MCF 10A (cell line): ENCODE measurements at regions of chr12 and their contacts with region 1.

Region 1: GRCh38 chr12:104215638-104216297 is at the start of gene TXNRD1:
- DNase-seq: no peak
- H3K4me3 Mint-ChIP-seq: no peak within 1 kb of the TSS
- H3K27ac Mint-ChIP-seq: peak within 1 kb of the TSS; percentile 6
- H3K4me1 Mint-ChIP-seq: peaks cover 20% of the 10 kb centered on the region
- H3K27me3 Mint-ChIP-seq: no peaks in the 10 kb centered on the region
- CTCF ChIP-seq: no peak
- total RNA-seq, gene TXNRD1: 64.0 and 82.8 TPM in 2 replicates

Region 2: DNA sequence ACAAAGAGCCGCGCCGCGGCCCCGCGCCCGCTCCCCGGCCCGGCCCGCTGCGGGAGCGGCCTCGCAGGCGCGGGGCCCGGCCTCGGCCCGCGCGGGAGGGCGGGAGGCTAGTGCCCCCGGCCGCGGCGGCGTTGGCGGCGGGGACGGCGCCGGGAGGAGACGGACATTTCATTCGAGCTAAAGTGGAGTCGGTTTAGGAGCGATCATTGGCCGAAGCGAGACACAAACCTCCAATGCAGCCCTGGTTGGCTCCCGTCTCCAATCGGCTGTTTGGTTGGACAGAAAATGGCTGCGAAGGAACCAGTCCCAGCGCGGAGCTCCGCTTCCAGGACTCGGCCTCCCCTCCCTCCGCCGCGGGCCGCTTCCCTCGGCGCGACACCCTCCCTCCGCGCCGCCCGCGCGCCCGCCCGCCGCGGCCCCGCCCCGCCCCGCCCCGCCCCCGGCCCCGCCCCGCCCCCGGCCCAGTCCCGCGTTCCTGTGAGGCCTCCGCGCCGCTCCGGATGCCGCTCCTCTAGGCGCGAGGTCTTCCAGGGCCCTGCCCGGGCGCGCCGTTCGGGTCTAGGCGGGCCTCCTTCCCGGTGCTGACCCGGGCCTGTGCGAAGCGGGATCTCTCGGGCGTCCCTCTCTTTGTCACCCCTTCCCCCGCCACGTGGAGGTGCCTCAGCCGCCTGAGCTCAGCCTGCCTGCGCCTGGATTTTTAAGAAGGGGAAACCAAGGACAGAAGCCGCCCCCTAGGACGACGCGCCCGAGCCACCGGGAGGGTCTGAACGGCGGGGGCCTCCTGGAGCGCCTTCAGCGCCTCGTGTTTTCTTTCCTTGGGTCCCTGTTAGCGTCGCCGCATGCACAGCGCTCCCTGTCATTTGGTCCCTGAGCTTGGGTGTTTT is 77.6 kb before region 1 on chr12 and contains the start of gene NFYB:
- CTCF ChIA-PET with region 1: no interaction called
- POLR2A ChIA-PET with region 1: interaction called, 14 read pairs
- intact Hi-C with region 1: no loop called
- DNase-seq: peak; percentile 99
- H3K4me3 Mint-ChIP-seq: peak within 1 kb of the TSS; percentile 78
- H3K27ac Mint-ChIP-seq: peak within 1 kb of the TSS; percentile 46
- H3K4me1 Mint-ChIP-seq: peaks cover 8% of the 10 kb centered on the region
- H3K27me3 Mint-ChIP-seq: no peaks in the 10 kb centered on the region
- CTCF ChIP-seq: no peak
- total RNA-seq, gene NFYB: 24.8 and 27.0 TPM in 2 replicates

Region 3: GRCh38 chr12:104171785-104172442 is 43.9 kb before region 1 on chr12:
- CTCF ChIA-PET with region 1: no interaction called
- POLR2A ChIA-PET with region 1: no interaction called
- intact Hi-C with region 1: no loop called
- DNase-seq: no peak
- H3K4me3 Mint-ChIP-seq: no peak overlapping the region
- H3K27ac Mint-ChIP-seq: no peak overlapping the region
- H3K4me1 Mint-ChIP-seq: peaks cover 9% of the 10 kb centered on the region
- H3K27me3 Mint-ChIP-seq: no peaks in the 10 kb centered on the region
- CTCF ChIP-seq: no peak

Region 4: GRCh38 chr12:104230304-104231095 is 14.7 kb after region 1 on chr12:
- CTCF ChIA-PET with region 1: no interaction called
- POLR2A ChIA-PET with region 1: interaction called, 10 read pairs
- intact Hi-C with region 1: no loop called
- DNase-seq: no peak
- H3K4me3 Mint-ChIP-seq: no peak overlapping the region
- H3K27ac Mint-ChIP-seq: no peak overlapping the region
- H3K4me1 Mint-ChIP-seq: no peaks in the 10 kb centered on the region
- H3K27me3 Mint-ChIP-seq: no peaks in the 10 kb centered on the region
- CTCF ChIP-seq: no peak

Region 5: DNA sequence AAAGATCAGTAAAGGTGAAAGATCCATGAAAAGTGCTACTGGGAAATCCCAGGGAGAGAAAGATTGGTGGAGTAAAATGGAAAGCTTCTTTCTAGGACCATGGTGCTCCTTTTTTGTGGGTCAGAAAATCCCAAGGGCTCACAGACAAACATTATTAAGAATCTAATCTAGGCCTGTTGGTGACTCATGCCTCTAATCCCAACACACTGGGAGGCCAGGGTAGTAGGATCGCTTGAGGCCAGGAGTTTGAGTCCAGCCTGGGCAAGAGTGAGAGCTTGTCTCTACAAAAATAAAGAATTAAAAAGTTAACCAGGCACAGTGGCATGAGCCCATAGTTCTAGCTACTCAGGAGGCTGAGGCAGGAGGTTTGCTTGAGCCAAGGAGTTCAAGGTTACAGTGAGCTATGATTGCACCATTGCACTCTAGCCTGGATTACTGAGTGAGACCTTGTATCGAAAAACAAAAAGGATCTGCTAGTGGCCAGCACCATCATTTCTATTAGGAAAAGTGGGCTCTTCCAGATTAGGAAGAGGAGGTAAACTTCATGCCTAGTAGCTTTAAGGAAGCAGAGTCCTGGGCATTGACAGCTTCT is 42.8 kb after region 1 on chr12:
- CTCF ChIA-PET with region 1: interaction called, 3 read pairs
- POLR2A ChIA-PET with region 1: interaction called, 29 read pairs
- intact Hi-C with region 1: no loop called
- DNase-seq: no peak
- H3K4me3 Mint-ChIP-seq: no peak overlapping the region
- H3K27ac Mint-ChIP-seq: no peak overlapping the region
- H3K4me1 Mint-ChIP-seq: peaks cover 11% of the 10 kb centered on the region
- H3K27me3 Mint-ChIP-seq: no peaks in the 10 kb centered on the region
- CTCF ChIP-seq: no peak

Region 6: DNA sequence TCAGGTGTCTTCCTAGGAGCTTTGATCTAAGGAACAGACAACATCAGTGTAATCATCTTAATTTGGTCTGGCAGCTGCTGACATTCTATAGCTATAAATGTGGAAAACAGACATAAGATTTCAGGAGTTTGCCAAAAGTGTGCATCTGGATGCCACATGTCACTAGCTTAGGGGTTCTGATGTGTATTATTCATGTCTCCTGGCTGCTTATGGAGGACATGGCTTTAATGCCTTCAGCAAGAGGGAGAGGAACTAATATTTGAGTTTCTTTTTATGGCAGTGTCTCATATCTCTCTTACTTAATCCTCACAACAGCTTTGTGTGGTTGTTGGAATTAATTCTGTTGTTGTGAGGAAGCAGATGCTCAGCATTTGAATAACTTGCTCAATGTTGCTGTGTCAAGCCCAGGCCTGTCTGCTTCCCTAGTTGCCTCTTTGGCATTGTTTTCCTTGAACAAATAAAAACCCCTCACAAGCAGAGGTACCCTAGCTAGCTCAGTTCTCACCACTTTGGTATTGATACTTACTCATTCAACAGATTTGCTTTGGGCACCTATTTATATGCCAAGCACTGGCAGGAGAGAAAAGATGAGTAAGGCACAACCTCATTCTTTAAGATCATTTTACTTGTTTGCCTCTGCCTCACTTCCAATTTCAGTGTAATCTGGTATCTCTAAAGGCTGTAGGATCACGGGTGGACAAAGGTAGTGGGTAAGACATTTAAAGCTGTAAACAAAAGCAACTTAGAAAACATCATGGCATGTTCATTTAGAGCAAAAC is 48.0 kb after region 1 on chr12:
- CTCF ChIA-PET with region 1: interaction called, 3 read pairs
- POLR2A ChIA-PET with region 1: interaction called, 29 read pairs
- intact Hi-C with region 1: no loop called
- DNase-seq: peak; percentile 77
- H3K4me3 Mint-ChIP-seq: no peak overlapping the region
- H3K27ac Mint-ChIP-seq: peak overlapping the region; percentile 95
- H3K4me1 Mint-ChIP-seq: peaks cover 18% of the 10 kb centered on the region
- H3K27me3 Mint-ChIP-seq: no peaks in the 10 kb centered on the region
- CTCF ChIP-seq: no peak

Region 7: GRCh38 chr12:104276273-104277131 is 60.7 kb after region 1 on chr12:
- CTCF ChIA-PET with region 1: interaction called, 9 read pairs
- POLR2A ChIA-PET with region 1: interaction called, 37 read pairs
- intact Hi-C with region 1: no loop called
- DNase-seq: no peak
- H3K4me3 Mint-ChIP-seq: peak overlapping the region; percentile 27
- H3K27ac Mint-ChIP-seq: peak overlapping the region; percentile 69
- H3K4me1 Mint-ChIP-seq: peaks cover 40% of the 10 kb centered on the region
- H3K27me3 Mint-ChIP-seq: no peaks in the 10 kb centered on the region
- CTCF ChIP-seq: no peak

Region 8: GRCh38 chr12:104303538-104304151 is 87.9 kb after region 1 on chr12 and contains the start of gene EID3:
- CTCF ChIA-PET with region 1: no interaction called
- POLR2A ChIA-PET with region 1: interaction called, 11 read pairs
- intact Hi-C with region 1: no loop called
- DNase-seq: no peak
- H3K4me3 Mint-ChIP-seq: no peak within 1 kb of the TSS
- H3K27ac Mint-ChIP-seq: no peak within 1 kb of the TSS
- H3K4me1 Mint-ChIP-seq: peaks cover 32% of the 10 kb centered on the region
- H3K27me3 Mint-ChIP-seq: no peaks in the 10 kb centered on the region
- CTCF ChIP-seq: no peak
- total RNA-seq, gene EID3: 1.6 and 3.0 TPM in 2 replicates

Region 9: GRCh38 chr12:104846056-104846767 is 630.4 kb after region 1 on chr12:
- CTCF ChIA-PET with region 1: no interaction called
- POLR2A ChIA-PET with region 1: no interaction called
- intact Hi-C with region 1: no loop called
- DNase-seq: no peak
- H3K4me3 Mint-ChIP-seq: no peak overlapping the region
- H3K27ac Mint-ChIP-seq: no peak overlapping the region
- H3K4me1 Mint-ChIP-seq: no peaks in the 10 kb centered on the region
- H3K27me3 Mint-ChIP-seq: no peaks in the 10 kb centered on the region
- CTCF ChIP-seq: no peak